Mammary epithelial cell (primary cell): ENCODE measurements at regions of chr22 and their contacts with region 1.

Region 1: GRCh38 chr22:25564320-25564978 is at the start of gene GRK3:
- DNase-seq: peak; percentile 70
- H3K4me3 ChIP-seq: peak within 1 kb of the TSS; percentile 62 to 76 (median 65)
- H3K27ac ChIP-seq: peak within 1 kb of the TSS; percentile 22
- H3K4me1 ChIP-seq: peaks cover 10% of the 10 kb centered on the region
- H3K27me3 ChIP-seq: no peaks in the 10 kb centered on the region
- CTCF ChIP-seq: no peak
- total RNA-seq, gene GRK3: 12.8 to 16.0 TPM

Region 2: DNA sequence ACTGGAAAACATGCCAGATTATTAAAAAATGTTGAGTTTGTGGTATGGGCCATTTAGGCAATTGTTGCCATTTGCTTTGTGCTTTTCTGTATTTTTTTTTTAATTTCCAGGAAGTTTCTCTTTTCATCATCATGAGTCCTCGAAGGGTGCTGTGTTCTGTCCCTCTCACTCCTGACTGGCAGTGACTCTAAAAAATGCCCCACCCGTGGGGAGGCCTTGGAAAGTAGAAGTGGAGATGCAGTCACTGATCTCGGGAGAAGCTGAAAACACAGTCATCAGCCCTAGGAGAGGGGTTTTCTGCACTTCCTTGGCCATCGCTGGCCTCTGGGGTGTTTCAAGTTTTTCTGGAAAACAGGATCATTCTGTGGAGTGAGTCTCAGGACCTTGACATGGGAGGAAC is 98.5 kb before region 1 on chr22:
- CTCF ChIA-PET with region 1: no interaction called
- dilution Hi-C with region 1: no loop called
- in situ Hi-C with region 1: no loop called
- intact Hi-C with region 1: loop called (anchors 1 kb)
- DNase-seq: no peak
- H3K4me3 ChIP-seq: no peak overlapping the region
- H3K27ac ChIP-seq: no peak overlapping the region
- H3K4me1 ChIP-seq: no peaks in the 10 kb centered on the region
- H3K27me3 ChIP-seq: no peaks in the 10 kb centered on the region
- CTCF ChIP-seq: no peak

Region 3: GRCh38 chr22:25475257-25476022 is 89.0 kb before region 1 on chr22:
- CTCF ChIA-PET with region 1: interaction called, 12 read pairs
- dilution Hi-C with region 1: no loop called
- in situ Hi-C with region 1: no loop called
- intact Hi-C with region 1: no loop called
- DNase-seq: no peak
- H3K4me3 ChIP-seq: no peak overlapping the region
- H3K27ac ChIP-seq: no peak overlapping the region
- H3K4me1 ChIP-seq: no peaks in the 10 kb centered on the region
- H3K27me3 ChIP-seq: no peaks in the 10 kb centered on the region
- CTCF ChIP-seq: no peak

Region 4: DNA sequence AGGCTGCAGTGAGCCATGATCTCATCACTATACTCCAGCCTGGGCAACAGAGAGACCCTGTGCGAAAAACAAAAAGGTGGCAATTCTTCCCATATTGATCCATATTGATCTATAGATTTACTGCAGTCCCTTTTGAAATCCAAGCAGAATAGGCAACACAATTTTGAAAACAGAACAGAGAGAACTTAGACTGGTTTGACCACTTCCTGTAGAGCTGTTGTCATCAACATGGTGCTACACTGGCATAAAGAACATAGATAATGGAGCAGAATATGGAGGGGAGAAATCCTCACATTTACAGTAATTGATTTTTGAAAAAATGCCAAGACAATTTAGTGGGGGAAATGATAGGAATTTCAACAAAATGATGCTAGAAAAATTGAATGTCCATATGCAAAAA is 34.2 kb after region 1 on chr22:
- CTCF ChIA-PET with region 1: no interaction called
- dilution Hi-C with region 1: no loop called
- in situ Hi-C with region 1: no loop called
- intact Hi-C with region 1: no loop called
- DNase-seq: no peak
- H3K4me3 ChIP-seq: no peak overlapping the region
- H3K27ac ChIP-seq: no peak overlapping the region
- H3K4me1 ChIP-seq: peaks cover 8% of the 10 kb centered on the region
- H3K27me3 ChIP-seq: no peaks in the 10 kb centered on the region
- CTCF ChIP-seq: no peak